CD14-positive monocyte (primary cell): ENCODE measurements at regions of chr6 and their contacts with region 1.

Region 1: GRCh38 chr6:158644231-158645063 is at the start of gene DYNLT1:
- DNase-seq: peak; percentile 83 to 90 (median 84)
- H3K4me3 ChIP-seq: peak within 1 kb of the TSS; percentile 61 to 97 (median 78)
- H3K4me3 Mint-ChIP-seq: peak within 1 kb of the TSS; percentile 95 to 98
- H3K27ac ChIP-seq: peak within 1 kb of the TSS; percentile 82 to 95
- H3K27ac Mint-ChIP-seq: peak within 1 kb of the TSS; percentile 94 to 98 (median 96)
- H3K4me1 ChIP-seq: peaks cover 31 to 52% of the 10 kb centered on the region in 2 donors
- H3K4me1 Mint-ChIP-seq: peaks cover 50% of the 10 kb centered on the region
- H3K27me3 ChIP-seq: no peaks in the 10 kb centered on the region
- H3K27me3 Mint-ChIP-seq: no peaks in the 10 kb centered on the region
- CTCF ChIP-seq: no peak
- polyA plus RNA-seq, gene DYNLT1: 248 to 287 (median 286) TPM

Region 2: DNA sequence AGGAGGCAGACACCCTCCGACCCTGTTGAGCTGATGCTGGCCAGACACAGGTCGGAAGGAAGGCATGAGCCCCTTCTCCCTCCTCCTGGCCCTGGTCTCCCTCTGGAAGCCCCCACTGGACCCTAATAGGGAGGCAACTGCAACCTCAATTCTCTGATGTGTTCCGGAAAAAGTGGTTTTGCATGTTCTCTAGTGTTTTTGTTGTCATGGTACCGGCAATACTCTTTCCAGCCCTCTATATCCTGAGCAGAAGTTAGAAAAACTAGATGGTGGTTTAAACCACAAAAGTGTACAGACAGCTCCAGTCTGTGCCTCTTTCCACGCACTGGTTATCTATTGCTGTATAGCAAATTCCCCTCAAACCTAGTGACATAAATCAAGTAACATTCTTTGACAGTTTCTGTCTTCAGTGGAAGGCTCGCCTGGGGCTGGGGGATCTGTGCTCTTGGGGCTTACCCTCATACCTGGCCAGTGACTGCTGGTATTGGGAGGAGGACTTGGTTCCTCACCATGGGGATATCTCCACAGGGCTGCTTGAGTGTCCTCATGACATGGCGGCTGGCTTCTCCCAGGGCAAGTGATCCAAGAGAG is 42.4 kb after region 1 on chr6:
- intact Hi-C with region 1: loop called (anchors 5 to 10 kb)
- DNase-seq: peak; percentile 33 to 57 (median 51)
- H3K4me3 ChIP-seq: peak overlapping the region in 1 of 3 experiments; percentile 56
- H3K4me3 Mint-ChIP-seq: peak overlapping the region; percentile 45 to 76
- H3K27ac ChIP-seq: peak overlapping the region; percentile 66 to 90
- H3K27ac Mint-ChIP-seq: peak overlapping the region; percentile 84 to 95 (median 91)
- H3K4me1 ChIP-seq: peaks cover 25 to 40% of the 10 kb centered on the region in 2 donors
- H3K4me1 Mint-ChIP-seq: peaks cover 41% of the 10 kb centered on the region
- H3K27me3 ChIP-seq: no peaks in the 10 kb centered on the region
- H3K27me3 Mint-ChIP-seq: peaks cover 0 to 2% (median 1%) of the 10 kb centered on the region in 3 donors
- CTCF ChIP-seq: no peak